GM12878 (cell line): ENCODE measurements at regions of chr11 and their contacts with region 1.

Region 1: DNA sequence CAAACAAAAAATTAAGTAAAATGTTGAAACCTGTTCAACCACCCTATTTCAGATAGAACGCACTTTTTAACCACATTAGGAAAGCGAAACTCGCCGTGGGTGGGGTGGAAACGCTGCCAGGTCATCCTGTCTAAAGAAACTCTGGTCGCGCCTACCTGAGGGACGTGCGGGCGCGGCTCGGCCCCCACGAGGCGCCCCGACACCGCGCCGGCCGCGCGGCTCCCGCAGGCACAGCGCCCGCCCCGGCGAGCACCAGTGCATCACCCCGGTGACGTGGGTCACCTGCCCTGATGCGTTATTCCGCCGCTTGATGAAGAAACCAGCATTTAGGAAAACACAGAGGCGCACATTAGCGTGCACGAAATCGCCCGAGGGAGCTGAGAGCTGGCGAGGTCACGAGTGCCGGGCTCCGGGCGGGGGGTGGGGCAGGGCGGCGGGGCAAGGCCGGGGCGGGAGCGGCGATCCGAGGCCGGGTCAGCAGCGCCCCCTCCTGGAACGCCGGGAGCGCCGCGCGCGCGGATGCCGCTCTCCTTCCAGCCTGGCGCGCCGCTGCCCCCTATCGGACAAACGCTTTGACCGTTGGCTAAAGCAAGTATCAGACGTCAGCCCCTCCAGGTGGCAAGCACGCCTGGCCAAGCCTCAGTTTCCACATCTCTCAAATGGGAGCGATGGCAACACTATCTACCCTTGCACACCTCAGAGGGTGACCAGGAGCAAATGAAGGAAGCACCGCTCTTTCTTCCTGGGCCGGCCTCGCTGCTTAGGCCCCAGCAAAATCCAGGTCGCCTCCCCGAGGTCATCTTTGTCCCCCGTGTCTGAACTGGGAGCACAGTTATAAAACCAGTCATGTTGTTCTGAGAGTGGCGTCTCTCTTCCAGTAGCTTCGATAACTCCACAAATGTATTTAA is 15.7 kb upstream of the SNX32 start:
- DNase-seq: no peak
- ATAC-seq: peak; percentile 94
- H3K4me3 ChIP-seq: peak overlapping the region; percentile 65
- H3K27ac ChIP-seq: no peak overlapping the region
- H3K4me1 ChIP-seq: peaks cover 3% of the 10 kb centered on the region; the same call in 1 of the 2 replicates
- H3K27me3 ChIP-seq: no peaks in the 10 kb centered on the region
- CTCF ChIP-seq: peak; percentile 97 to 99 (median 98)
- EP300 ChIP-seq: 0 out of 4 replicates have a peak, but pooled peaks of 1 of the 2 experiments have one; percentile 30
- POLR2A ChIP-seq: no peak
- RAD21 ChIP-seq: peak; percentile 87

Region 2: DNA sequence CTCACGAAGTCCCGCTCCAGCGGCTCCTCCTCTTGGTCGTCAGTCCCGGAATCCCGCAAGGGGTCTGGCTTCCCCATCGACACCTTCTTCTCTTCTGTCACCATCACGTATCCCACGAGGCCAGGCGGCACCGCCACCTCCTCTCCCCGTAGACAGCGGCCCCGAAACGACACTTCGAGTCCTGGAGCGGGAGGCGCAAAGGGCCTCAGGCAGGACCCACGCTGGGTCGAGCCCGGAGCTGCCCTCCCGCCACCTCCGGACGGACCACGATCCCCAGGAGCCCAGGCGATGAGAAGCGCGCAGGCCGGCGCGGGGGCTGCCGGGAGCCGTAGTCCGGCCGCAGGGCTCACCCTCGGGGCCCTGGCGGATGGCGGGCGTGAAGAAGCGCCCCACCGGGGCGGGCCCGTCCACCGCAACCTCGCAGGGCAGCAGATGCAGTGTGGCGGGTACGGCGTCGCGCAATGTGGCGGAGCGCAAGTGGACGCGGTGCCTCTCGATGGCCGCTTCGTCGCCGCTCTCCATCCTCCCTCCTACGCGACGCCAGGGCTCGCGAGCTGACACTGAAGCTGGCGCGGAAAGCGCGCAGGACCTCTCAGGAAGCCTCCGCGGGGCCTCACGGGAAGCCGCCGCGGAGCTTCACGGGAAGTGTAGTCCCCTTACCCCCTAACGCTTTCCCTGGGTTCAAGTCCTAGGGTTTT is 97.7 kb before region 1 on chr11 and contains the start of gene RNASEH2C:
- CTCF ChIA-PET with region 1: interaction called, 14 read pairs
- POLR2A ChIA-PET with region 1: interaction called, 4 read pairs
- RAD21 ChIA-PET with region 1: interaction called, 10 read pairs
- SMC1A ChIA-PET with region 1: interaction called, 4 read pairs
- in situ Hi-C with region 1: no loop called
- intact Hi-C with region 1: no loop called
- DNase-seq: peak; percentile 38
- ATAC-seq: peak; percentile 96
- H3K4me3 ChIP-seq: peak within 1 kb of the TSS; percentile 94
- H3K27ac ChIP-seq: peak within 1 kb of the TSS; percentile 78
- H3K4me1 ChIP-seq: peaks cover 12% of the 10 kb centered on the region
- H3K27me3 ChIP-seq: no peaks in the 10 kb centered on the region
- CTCF ChIP-seq: 0 out of 6 replicates have a peak, but pooled peaks of 1 of the 3 experiments have one; percentile 1
- EP300 ChIP-seq: no peak
- POLR2A ChIP-seq: peak; percentile 97
- RAD21 ChIP-seq: no peak
- polyA plus RNA-seq, gene RNASEH2C: 5.0 to 27.1 TPM

Region 3: GRCh38 chr11:65736810-65737209 is 81.3 kb before region 1 on chr11:
- CTCF ChIA-PET with region 1: no interaction called
- POLR2A ChIA-PET with region 1: no interaction called
- RAD21 ChIA-PET with region 1: no interaction called
- SMC1A ChIA-PET with region 1: no interaction called
- in situ Hi-C with region 1: no loop called
- intact Hi-C with region 1: no loop called
- DNase-seq: no peak
- ATAC-seq: no peak
- H3K4me3 ChIP-seq: no peak overlapping the region
- H3K27ac ChIP-seq: no peak overlapping the region
- H3K4me1 ChIP-seq: no peaks in the 10 kb centered on the region
- H3K27me3 ChIP-seq: peaks cover 0 to 3% of the 10 kb centered on the region in 2 experiments; a peak in 2 of 4 replicates
- CTCF ChIP-seq: no peak
- EP300 ChIP-seq: no peak
- POLR2A ChIP-seq: no peak
- RAD21 ChIP-seq: no peak

Region 4: DNA sequence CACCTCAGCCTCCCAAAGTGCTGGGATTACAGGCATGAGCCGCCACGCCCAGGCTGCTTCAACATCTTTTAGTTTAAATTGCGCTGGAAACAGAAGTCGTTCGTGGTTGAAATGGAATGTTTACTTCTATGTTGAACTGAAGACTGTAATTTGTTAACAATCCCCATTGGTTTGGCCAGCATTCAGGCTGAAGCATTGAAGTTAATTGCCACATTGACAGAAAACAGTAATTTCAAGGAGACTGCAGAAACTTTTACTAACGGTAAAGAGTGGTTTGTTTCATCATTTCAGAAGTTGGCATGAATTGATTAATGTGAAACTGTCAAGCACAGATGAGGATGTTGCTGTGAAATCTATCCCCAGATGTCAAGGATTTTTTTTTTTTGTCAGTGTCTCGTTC is 51.6 kb before region 1 on chr11:
- CTCF ChIA-PET with region 1: interaction called, 32 read pairs
- POLR2A ChIA-PET with region 1: no interaction called
- RAD21 ChIA-PET with region 1: interaction called, 6 read pairs
- SMC1A ChIA-PET with region 1: interaction called, 6 read pairs
- in situ Hi-C with region 1: no loop called
- intact Hi-C with region 1: no loop called
- DNase-seq: no peak
- ATAC-seq: no peak; the same call in 2 of the 3 replicates
- H3K4me3 ChIP-seq: no peak overlapping the region
- H3K27ac ChIP-seq: no peak overlapping the region
- H3K4me1 ChIP-seq: no peaks in the 10 kb centered on the region
- H3K27me3 ChIP-seq: no peaks in the 10 kb centered on the region
- CTCF ChIP-seq: no peak
- EP300 ChIP-seq: no peak
- POLR2A ChIP-seq: no peak
- RAD21 ChIP-seq: no peak

Region 5: DNA sequence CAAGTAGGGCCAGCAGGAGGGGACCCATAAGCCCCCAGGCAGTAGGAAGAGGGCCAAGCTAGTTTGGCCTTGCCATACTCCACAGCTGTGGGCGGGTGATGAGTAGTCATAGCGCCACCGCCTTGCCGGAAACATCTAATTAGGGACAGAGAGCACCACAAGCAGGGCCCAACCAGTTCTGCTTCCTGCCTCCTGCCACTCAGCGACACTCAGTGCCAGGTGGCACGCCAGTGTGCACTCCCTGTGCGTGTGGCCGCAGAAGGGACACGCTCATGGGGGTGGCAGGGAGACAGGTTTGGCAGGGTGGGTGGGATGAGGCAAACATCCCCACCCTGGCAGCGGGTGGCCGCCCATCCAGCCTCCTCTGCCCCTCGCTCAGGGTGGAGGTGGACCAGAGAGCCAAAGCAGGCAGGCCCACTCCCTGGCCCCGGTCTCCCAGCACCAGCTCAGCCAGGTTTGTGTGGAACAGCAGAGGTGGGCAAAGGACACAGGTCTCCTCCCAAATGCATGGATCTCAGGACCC is 26.3 kb before region 1 on chr11:
- CTCF ChIA-PET with region 1: interaction called, 35 read pairs
- POLR2A ChIA-PET with region 1: interaction called, 5 read pairs
- RAD21 ChIA-PET with region 1: interaction called, 9 read pairs
- SMC1A ChIA-PET with region 1: interaction called, 3 read pairs
- in situ Hi-C with region 1: no loop called
- intact Hi-C with region 1: no loop called
- DNase-seq: peak; percentile 73
- ATAC-seq: peak; percentile 99
- H3K4me3 ChIP-seq: no peak overlapping the region
- H3K27ac ChIP-seq: peak overlapping the region; percentile 54
- H3K4me1 ChIP-seq: peaks cover 30% of the 10 kb centered on the region
- H3K27me3 ChIP-seq: peaks cover 5 to 8% of the 10 kb centered on the region in 2 experiments; a peak in 2 of 4 replicates
- CTCF ChIP-seq: peak in 1 of 3 experiments; percentile 10; a peak in 1 of 6 replicates
- EP300 ChIP-seq: peak; percentile 21 to 49; a peak in 3 of 4 replicates
- POLR2A ChIP-seq: peak; percentile 93
- RAD21 ChIP-seq: no peak

Region 6: DNA sequence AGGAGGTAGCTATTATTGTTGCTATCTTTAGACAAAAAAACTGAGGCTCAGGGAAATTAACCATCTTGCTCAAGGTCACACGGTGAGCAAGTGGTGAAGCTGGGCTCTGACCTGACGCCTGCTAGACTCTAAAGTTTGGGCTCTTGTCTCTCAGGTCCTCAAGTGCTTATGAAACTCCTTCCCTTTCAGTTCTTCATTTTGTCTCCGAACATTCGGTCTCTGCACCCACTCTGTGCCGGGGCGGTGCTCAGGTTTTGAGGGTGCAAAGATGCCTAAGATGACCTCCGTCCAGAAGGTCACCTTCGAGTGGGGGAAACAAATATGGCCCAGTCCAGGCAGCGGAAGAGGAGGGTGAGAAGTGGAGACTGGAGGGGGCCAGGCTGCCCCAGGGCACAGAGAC is 15.2 kb before region 1 on chr11:
- CTCF ChIA-PET with region 1: interaction called, 19 read pairs
- POLR2A ChIA-PET with region 1: interaction called, 9 read pairs
- RAD21 ChIA-PET with region 1: interaction called, 7 read pairs
- SMC1A ChIA-PET with region 1: interaction called, 6 read pairs
- in situ Hi-C with region 1: no loop called
- intact Hi-C with region 1: no loop called
- DNase-seq: peak; percentile 71
- ATAC-seq: peak; percentile 99
- H3K4me3 ChIP-seq: no peak overlapping the region
- H3K27ac ChIP-seq: no peak overlapping the region
- H3K4me1 ChIP-seq: peaks cover 15% of the 10 kb centered on the region
- H3K27me3 ChIP-seq: no peaks in the 10 kb centered on the region
- CTCF ChIP-seq: no peak
- EP300 ChIP-seq: 0 out of 4 replicates have a peak, but pooled peaks of 1 of the 2 experiments have one; percentile 44
- POLR2A ChIP-seq: peak; percentile 38; the same call in 1 of the 2 replicates
- RAD21 ChIP-seq: no peak

Region 7: GRCh38 chr11:65833297-65834030 is 15.4 kb after region 1 on chr11 and contains the start of gene SNX32:
- CTCF ChIA-PET with region 1: interaction called, 19 read pairs
- POLR2A ChIA-PET with region 1: interaction called, 3 read pairs
- RAD21 ChIA-PET with region 1: no interaction called
- SMC1A ChIA-PET with region 1: interaction called, 5 read pairs
- in situ Hi-C with region 1: no loop called
- intact Hi-C with region 1: no loop called
- DNase-seq: peak; percentile 73
- ATAC-seq: peak; percentile 100
- H3K4me3 ChIP-seq: peak within 1 kb of the TSS; percentile 64
- H3K27ac ChIP-seq: peak within 1 kb of the TSS; percentile 52; the same call in 1 of the 2 replicates
- H3K4me1 ChIP-seq: peaks cover 15% of the 10 kb centered on the region
- H3K27me3 ChIP-seq: peaks cover 0 to 7% of the 10 kb centered on the region in 2 experiments; a peak in 1 of 4 replicates
- CTCF ChIP-seq: no peak
- EP300 ChIP-seq: no peak
- POLR2A ChIP-seq: peak; percentile 40; the same call in 1 of the 2 replicates
- RAD21 ChIP-seq: no peak
- polyA plus RNA-seq, gene SNX32: 0.04 to 0.06 TPM

Region 8: GRCh38 chr11:65988791-65989592 is 170.9 kb after region 1 on chr11:
- CTCF ChIA-PET with region 1: interaction called, 5 read pairs
- POLR2A ChIA-PET with region 1: no interaction called
- RAD21 ChIA-PET with region 1: no interaction called
- SMC1A ChIA-PET with region 1: interaction called, 3 read pairs
- in situ Hi-C with region 1: no loop called
- intact Hi-C with region 1: loop called (anchors 1 kb)
- DNase-seq: peak; percentile 90
- ATAC-seq: peak; percentile 100
- H3K4me3 ChIP-seq: no peak overlapping the region
- H3K27ac ChIP-seq: no peak overlapping the region
- H3K4me1 ChIP-seq: no peaks in the 10 kb centered on the region
- H3K27me3 ChIP-seq: no peaks in the 10 kb centered on the region
- CTCF ChIP-seq: peak; percentile 92 to 100 (median 99); a peak in 5 of 6 replicates
- EP300 ChIP-seq: no peak
- POLR2A ChIP-seq: no peak; the same call in 1 of the 2 replicates
- RAD21 ChIP-seq: peak; percentile 94

Region 9: DNA sequence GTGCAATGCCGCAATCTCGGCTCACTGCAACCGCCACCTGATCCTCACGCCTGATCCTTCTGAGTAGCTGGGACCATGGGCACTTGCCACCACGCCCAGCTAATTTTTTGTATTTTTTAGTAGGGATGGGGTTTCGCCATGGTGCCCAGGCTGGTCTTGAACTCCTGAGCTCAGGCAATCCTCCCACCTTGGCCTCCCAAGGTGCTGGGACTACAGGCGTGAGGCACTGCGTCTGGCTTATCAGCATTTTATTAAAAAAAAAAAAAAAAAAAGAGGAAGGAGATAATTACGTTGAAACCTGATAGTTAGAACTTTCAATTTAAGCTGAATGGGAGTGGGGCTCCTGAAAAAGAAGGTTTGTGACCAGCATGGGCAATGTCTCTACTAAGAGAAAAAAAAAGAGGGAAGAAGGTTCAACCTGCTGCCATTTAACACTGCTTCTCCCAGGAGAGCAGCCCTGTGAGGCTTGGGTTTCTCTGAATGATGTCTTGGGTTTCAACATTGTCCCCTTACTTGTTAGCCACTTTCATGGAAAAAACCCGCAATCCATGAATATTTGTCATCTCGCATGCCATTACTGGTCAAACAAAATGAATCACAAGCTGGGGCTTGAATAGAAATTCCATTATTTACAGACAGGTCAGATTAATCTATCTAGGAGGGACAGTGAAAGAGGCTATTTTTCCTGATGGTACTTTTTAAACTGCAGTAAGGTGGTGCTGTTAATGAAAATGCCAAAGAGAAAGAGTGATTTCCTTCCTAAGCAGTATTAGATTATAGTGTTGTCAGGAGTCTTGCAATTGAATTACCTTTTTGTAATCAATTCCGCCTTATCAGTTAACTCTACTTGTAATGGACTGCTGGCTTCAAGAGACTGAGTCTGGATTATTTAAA is 324.5 kb after region 1 on chr11:
- CTCF ChIA-PET with region 1: no interaction called
- POLR2A ChIA-PET with region 1: no interaction called
- RAD21 ChIA-PET with region 1: no interaction called
- SMC1A ChIA-PET with region 1: no interaction called
- in situ Hi-C with region 1: no loop called
- intact Hi-C with region 1: no loop called
- DNase-seq: no peak
- ATAC-seq: no peak
- H3K4me3 ChIP-seq: no peak overlapping the region
- H3K27ac ChIP-seq: no peak overlapping the region
- H3K4me1 ChIP-seq: peaks cover 42% of the 10 kb centered on the region
- H3K27me3 ChIP-seq: no peaks in the 10 kb centered on the region
- CTCF ChIP-seq: no peak
- EP300 ChIP-seq: no peak
- POLR2A ChIP-seq: no peak
- RAD21 ChIP-seq: no peak